Naive thymus-derived CD8-positive, alpha-beta T cell (primary cell): ENCODE measurements at regions of chr3 and their contacts with region 1.

Region 1: GRCh38 chr3:45118615-45119071 is 27.5 kb downstream of the CDCP1 start:
- DNase-seq: no peak
- ATAC-seq: no peak
- H3K4me3 Mint-ChIP-seq: peak overlapping the region in 6 of 10 donors; percentile 38 to 55 (median 46)
- H3K27ac Mint-ChIP-seq: peak overlapping the region in 4 of 10 donors; percentile 43 to 84 (median 60)
- H3K4me1 Mint-ChIP-seq: peaks cover 15 to 27% (median 21%) of the 10 kb centered on the region in 4 donors
- H3K27me3 Mint-ChIP-seq: peaks cover 0 to 15% (median 2%) of the 10 kb centered on the region in 5 donors

Region 2: GRCh38 chr3:44966750-44967278 is 151.8 kb before region 1 on chr3:
- POLR2A ChIA-PET with region 1: no interaction called
- DNase-seq: no peak
- ATAC-seq: no peak
- H3K4me3 Mint-ChIP-seq: peak overlapping the region in 3 of 10 donors; percentile 1 to 24 (median 21)
- H3K27ac Mint-ChIP-seq: peak overlapping the region in 5 of 10 donors; percentile 13 to 57 (median 49)
- H3K4me1 Mint-ChIP-seq: peaks cover 34 to 97% (median 88%) of the 10 kb centered on the region in 4 donors
- H3K27me3 Mint-ChIP-seq: no peaks in the 10 kb centered on the region

Region 3: GRCh38 chr3:45105855-45106671 is 12.6 kb before region 1 on chr3:
- POLR2A ChIA-PET with region 1: interaction called, 13 read pairs
- DNase-seq: peak; percentile 17 to 83 (median 65)
- ATAC-seq: peak; percentile 87 to 91
- H3K4me3 Mint-ChIP-seq: peak overlapping the region; percentile 22 to 79 (median 64)
- H3K27ac Mint-ChIP-seq: peak overlapping the region in 8 of 10 donors; percentile 0 to 83 (median 36)
- H3K4me1 Mint-ChIP-seq: peaks cover 33 to 73% (median 68%) of the 10 kb centered on the region in 4 donors
- H3K27me3 Mint-ChIP-seq: peaks cover 8 to 22% (median 13%) of the 10 kb centered on the region in 5 donors